ENCODE measurements at regions of chr9 and their contacts with region 1.

Region 1: GRCh38 chr9:96738147-96739027 is 39.5 kb downstream of the ZNF510 start:
- DNase-seq: no peak
- ATAC-seq: no peak
- H3K4me3 ChIP-seq: no peak overlapping the region
- H3K27ac ChIP-seq: no peak overlapping the region
- H3K4me1 ChIP-seq: no peaks in the 10 kb centered on the region
- H3K27me3 ChIP-seq: no peaks in the 10 kb centered on the region
- CTCF ChIP-seq: no peak
- EP300 ChIP-seq: no peak
- POLR2A ChIP-seq: no peak
- RAD21 ChIP-seq: no peak

Region 2: DNA sequence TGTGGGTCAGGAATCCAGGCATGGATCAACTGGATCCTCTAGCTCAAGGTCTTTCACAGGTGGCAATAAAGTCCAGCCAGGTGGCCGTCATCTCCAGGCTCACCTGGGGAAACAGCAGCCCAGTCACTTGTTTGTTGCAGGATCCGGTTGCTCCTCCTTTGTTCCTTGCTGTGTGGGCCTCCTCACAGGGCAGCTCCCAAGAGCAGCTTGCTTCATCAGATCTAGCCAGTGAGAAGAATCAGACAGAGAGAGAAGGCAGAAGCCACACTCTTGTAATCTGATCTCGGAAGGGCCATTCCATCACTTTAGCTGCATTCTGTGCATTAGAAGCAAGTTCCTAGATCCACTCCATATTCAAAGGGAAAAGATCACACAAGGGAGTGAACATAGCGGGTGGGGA is 433.2 kb before region 1 on chr9:
- CTCF ChIA-PET with region 1: no interaction called
- POLR2A ChIA-PET with region 1: no interaction called
- in situ Hi-C with region 1: no loop called
- intact Hi-C with region 1: loop called (anchors 5 kb)
- DNase-seq: no peak
- ATAC-seq: no peak
- H3K4me3 ChIP-seq: no peak overlapping the region
- H3K27ac ChIP-seq: no peak overlapping the region
- H3K4me1 ChIP-seq: no peaks in the 10 kb centered on the region
- H3K27me3 ChIP-seq: 0 out of 5 replicates have a peak, but pooled peaks cover 0 to 1% of the 10 kb centered on the region in 2 experiments
- CTCF ChIP-seq: no peak
- EP300 ChIP-seq: no peak
- POLR2A ChIP-seq: no peak
- RAD21 ChIP-seq: no peak

Region 3: GRCh38 chr9:96779089-96779488 is 40.7 kb after region 1 on chr9:
- CTCF ChIA-PET with region 1: no interaction called
- POLR2A ChIA-PET with region 1: no interaction called
- in situ Hi-C with region 1: no loop called
- intact Hi-C with region 1: no loop called
- DNase-seq: no peak
- ATAC-seq: no peak
- H3K4me3 ChIP-seq: no peak overlapping the region
- H3K27ac ChIP-seq: no peak overlapping the region
- H3K4me1 ChIP-seq: 0 out of 2 replicates have a peak, but pooled peaks cover 11% of the 10 kb centered on the region
- H3K27me3 ChIP-seq: no peaks in the 10 kb centered on the region
- CTCF ChIP-seq: no peak
- EP300 ChIP-seq: no peak
- POLR2A ChIP-seq: no peak
- RAD21 ChIP-seq: no peak

Region 4: DNA sequence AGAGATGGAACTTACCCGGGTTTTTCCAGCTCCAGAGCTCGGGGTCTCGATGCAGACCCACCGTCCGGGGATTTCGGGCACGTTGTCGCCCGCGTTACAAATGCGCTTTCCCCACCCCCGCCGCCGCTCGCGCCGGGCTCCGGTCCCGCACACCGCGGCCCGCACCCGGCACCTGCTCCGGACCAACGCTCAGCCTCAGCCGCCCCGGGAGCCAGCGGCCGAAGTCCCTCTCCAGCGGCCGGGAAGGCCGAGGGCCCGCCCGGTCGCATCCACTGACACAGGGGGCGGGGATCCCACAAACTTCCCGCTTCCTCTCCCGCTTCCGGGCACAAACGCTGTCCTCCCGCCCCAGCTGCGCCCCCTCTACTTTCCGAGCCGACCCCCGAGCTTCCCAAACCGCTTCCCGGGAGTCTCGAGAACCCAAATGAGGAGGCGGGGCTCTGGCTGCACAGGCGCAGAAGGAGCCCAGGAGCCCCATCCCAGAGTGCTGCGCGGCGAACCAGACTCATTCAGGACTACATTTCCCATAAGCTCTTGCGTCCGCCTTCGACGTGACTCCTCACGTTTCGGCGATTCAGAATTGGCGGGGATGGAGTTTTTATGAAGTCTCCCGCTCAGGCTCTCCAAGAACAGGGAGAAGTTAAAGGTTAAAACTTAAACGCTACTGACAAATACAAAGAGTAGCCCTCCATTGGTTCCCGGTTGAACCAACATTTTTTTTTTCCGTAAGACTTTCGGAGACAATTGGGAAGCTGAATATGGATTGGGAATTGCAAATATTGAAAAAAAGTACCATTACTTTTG is 115.9 kb after region 1 on chr9 and contains the start of gene ZNF782:
- CTCF ChIA-PET with region 1: no interaction called
- POLR2A ChIA-PET with region 1: no interaction called
- in situ Hi-C with region 1: no loop called
- intact Hi-C with region 1: no loop called
- DNase-seq: peak; percentile 93
- ATAC-seq: peak; percentile 78
- H3K4me3 ChIP-seq: peak within 1 kb of the TSS; percentile 78 to 84 (median 83)
- H3K27ac ChIP-seq: peak within 1 kb of the TSS; percentile 87
- H3K4me1 ChIP-seq: peaks cover 73% of the 10 kb centered on the region
- H3K27me3 ChIP-seq: no peaks in the 10 kb centered on the region
- CTCF ChIP-seq: peak; percentile 31; the same call in 1 of the 2 replicates
- EP300 ChIP-seq: 0 out of 4 replicates have a peak, but pooled peaks of 1 of the 2 experiments have one; percentile 26
- POLR2A ChIP-seq: peak; percentile 44 to 63; a peak in 3 of 4 replicates
- RAD21 ChIP-seq: peak; percentile 22; the same call in 1 of the 2 replicates
- total RNA-seq, gene ZNF782: 4.7 and 4.9 TPM in 2 replicates

Measured in HepG2 (cell line).